Aorta (tissue), 5 donors: ENCODE measurements at regions of chr2 and their contacts with region 1.

Region 1: GRCh38 chr2:186575302-186575701 is 14.6 kb upstream of the ITGAV start:
- DNase-seq: peak in 1 of 2 donors; percentile 71
- ATAC-seq: peak; percentile 93
- H3K4me3 ChIP-seq: no peak overlapping the region
- H3K27ac ChIP-seq: no peak overlapping the region
- H3K4me1 ChIP-seq: peaks cover 0 to 4% of the 10 kb centered on the region in 2 donors
- H3K27me3 ChIP-seq: no peaks in the 10 kb centered on the region

Region 2: DNA sequence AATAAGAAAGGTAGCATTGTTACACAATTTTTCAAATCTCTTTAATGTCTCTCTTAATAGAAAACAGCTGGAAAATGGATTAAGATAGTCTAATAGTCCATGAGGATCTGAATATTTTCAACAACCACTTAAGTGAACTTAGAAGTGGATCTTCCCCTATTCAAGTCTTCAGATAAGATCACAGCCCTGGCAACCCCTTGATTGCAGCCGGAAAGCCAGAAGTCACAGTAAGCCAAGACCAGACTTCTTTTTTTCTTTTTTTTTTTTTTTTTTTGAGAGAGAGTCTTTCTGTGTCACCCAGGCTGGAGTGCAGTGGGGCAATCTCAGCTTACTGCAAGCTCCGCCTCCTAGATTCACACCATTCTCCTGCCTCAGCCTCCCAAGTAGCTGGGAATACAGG is 107.9 kb before region 1 on chr2:
- intact Hi-C with region 1: no loop called
- DNase-seq: no peak
- ATAC-seq: no peak
- H3K4me3 ChIP-seq: no peak overlapping the region
- H3K27ac ChIP-seq: no peak overlapping the region
- H3K4me1 ChIP-seq: peaks cover 0 to 1% of the 10 kb centered on the region in 2 donors
- H3K27me3 ChIP-seq: no peaks in the 10 kb centered on the region

Region 3: GRCh38 chr2:186544255-186544675 is 31.0 kb before region 1 on chr2:
- intact Hi-C with region 1: loop called in 1 of 2 experiments (anchors 5 kb)
- DNase-seq: no peak
- ATAC-seq: peak; percentile 57
- H3K4me3 ChIP-seq: no peak overlapping the region
- H3K27ac ChIP-seq: peak overlapping the region in 1 of 2 donors; percentile 28
- H3K4me1 ChIP-seq: peaks cover 0 to 6% of the 10 kb centered on the region in 2 donors
- H3K27me3 ChIP-seq: no peaks in the 10 kb centered on the region